ENCODE measurements at regions of chr15 and their contacts with region 1.

Region 1: GRCh38 chr15:101251830-101252820 is at the start of gene CHSY1:
- DNase-seq: peak; percentile 92 to 96 (median 95)
- H3K4me3 ChIP-seq: peak within 1 kb of the TSS; percentile 77
- H3K27ac ChIP-seq: peak within 1 kb of the TSS; percentile 79 to 88
- H3K4me1 ChIP-seq: peaks cover 14% of the 10 kb centered on the region
- H3K27me3 ChIP-seq: no peaks in the 10 kb centered on the region
- CTCF ChIP-seq: peak in 2 of 3 donors; percentile 23 to 36
- EP300 ChIP-seq: no peak
- POLR2A ChIP-seq: peak; percentile 97
- total RNA-seq, gene CHSY1: 23.0 to 69.9 (median 33.1) TPM

Region 2: GRCh38 chr15:101088788-101089583 is 163.1 kb before region 1 on chr15:
- intact Hi-C with region 1: loop called (anchors 2 to 5 kb)
- DNase-seq: peak; percentile 51 to 82 (median 75)
- H3K4me3 ChIP-seq: peak overlapping the region; percentile 30
- H3K27ac ChIP-seq: peak overlapping the region in 1 of 2 donors; percentile 18
- H3K4me1 ChIP-seq: peaks cover 17% of the 10 kb centered on the region
- H3K27me3 ChIP-seq: no peaks in the 10 kb centered on the region
- CTCF ChIP-seq: peak; percentile 84 to 97 (median 93)
- EP300 ChIP-seq: no peak
- POLR2A ChIP-seq: no peak

Region 3: DNA sequence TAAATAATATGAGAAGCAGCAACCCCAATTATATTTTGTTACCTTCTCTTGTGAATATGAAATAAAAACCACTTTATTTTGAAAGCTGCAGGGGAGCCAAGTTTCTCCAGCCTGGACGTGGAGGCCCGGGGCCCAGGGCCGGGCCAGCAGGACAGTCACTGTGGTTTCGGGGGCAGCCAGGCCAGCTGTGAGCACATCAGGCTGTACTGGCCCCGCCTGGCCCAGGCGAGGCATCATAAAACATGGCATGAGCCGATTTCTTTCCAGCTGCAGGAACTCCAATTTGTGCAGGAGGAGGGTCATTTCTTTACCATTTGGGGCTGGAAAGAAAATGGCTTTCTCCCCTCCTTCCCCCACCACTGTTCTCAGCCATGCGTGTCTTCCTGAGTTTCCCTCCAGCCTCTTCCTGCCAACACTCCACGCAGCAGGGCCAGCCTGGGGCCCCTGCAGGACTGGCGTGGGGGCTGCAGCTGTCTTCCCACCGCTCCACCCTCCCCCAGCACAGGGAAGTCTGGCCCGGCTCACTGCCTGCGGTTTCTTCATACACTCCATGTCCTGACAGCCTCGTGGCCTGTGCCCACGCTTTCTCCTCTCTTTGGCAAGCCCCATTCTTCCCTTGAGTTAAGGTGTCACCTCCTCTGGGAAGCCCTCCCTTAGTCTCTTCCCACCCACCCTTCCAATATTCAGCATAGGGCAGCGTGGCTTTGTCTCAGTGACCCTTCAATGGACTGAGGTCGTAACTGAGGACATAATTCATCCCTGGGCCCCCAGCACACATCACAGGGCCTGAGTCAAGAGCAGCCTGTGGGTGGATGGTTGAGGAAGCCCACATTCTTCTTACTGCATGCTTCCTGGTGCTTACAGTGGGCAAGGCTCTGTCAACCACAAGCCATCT is 136.1 kb before region 1 on chr15:
- intact Hi-C with region 1: loop called in 3 of 4 experiments (anchors 5 to 10 kb)
- DNase-seq: peak; percentile 39 to 73 (median 56)
- H3K4me3 ChIP-seq: no peak overlapping the region
- H3K27ac ChIP-seq: no peak overlapping the region
- H3K4me1 ChIP-seq: peaks cover 2% of the 10 kb centered on the region
- H3K27me3 ChIP-seq: no peaks in the 10 kb centered on the region
- CTCF ChIP-seq: no peak
- EP300 ChIP-seq: no peak
- POLR2A ChIP-seq: no peak

Region 4: GRCh38 chr15:101121511-101122090 is 130.5 kb before region 1 on chr15:
- intact Hi-C with region 1: loop called in 3 of 4 experiments (anchors 5 to 10 kb)
- DNase-seq: peak; percentile 71 to 81 (median 75)
- H3K4me3 ChIP-seq: peak overlapping the region; percentile 6
- H3K27ac ChIP-seq: peak overlapping the region; percentile 7 to 61
- H3K4me1 ChIP-seq: peaks cover 7% of the 10 kb centered on the region
- H3K27me3 ChIP-seq: no peaks in the 10 kb centered on the region
- CTCF ChIP-seq: peak in 1 of 3 donors; percentile 17
- EP300 ChIP-seq: no peak
- POLR2A ChIP-seq: no peak

Region 5: DNA sequence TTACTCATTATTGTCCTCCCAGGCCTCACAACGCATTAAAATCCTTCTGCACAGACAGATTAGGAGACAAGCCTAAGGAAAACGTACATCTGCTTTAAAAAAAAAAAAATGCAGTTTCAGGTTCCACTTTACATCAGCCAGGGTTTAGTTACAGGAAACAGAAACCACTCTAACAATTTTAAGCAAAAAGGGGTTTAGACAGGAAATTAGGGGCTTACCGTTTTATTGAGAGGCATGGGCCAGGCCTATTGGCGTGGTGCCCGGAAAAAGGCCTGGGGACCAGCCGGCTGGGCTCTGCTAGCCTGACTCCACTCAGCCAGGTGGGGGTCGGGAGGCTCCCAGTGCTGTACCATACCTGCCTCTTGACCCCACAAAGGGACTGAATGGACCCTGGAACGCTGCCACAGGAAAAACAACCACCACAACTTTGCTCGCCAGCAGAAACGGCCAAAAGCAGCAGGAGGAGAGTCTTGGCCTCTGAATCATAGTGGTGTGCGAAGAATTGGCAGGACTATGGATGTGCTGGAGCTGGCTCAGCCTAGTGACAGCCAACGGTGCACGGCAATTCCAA is 124.5 kb before region 1 on chr15:
- intact Hi-C with region 1: loop called in 3 of 4 experiments (anchors 5 to 10 kb)
- DNase-seq: peak; percentile 86 to 90 (median 87)
- H3K4me3 ChIP-seq: no peak overlapping the region
- H3K27ac ChIP-seq: peak overlapping the region; percentile 37 to 80
- H3K4me1 ChIP-seq: peaks cover 13% of the 10 kb centered on the region
- H3K27me3 ChIP-seq: no peaks in the 10 kb centered on the region
- CTCF ChIP-seq: no peak
- EP300 ChIP-seq: no peak
- POLR2A ChIP-seq: no peak